Prostate gland (tissue), 2 donors: ENCODE measurements at regions of chr13 and their contacts with region 1.

Region 1: GRCh38 chr13:30114571-30115256 is 192.6 kb downstream of the KATNAL1 start:
- DNase-seq: peak; percentile 88
- H3K4me3 ChIP-seq: peak overlapping the region; percentile 52 to 82
- H3K27ac ChIP-seq: peak overlapping the region; percentile 39 to 63
- H3K4me1 ChIP-seq: peaks cover 2% of the 10 kb centered on the region
- H3K27me3 ChIP-seq: no peaks in the 10 kb centered on the region
- CTCF ChIP-seq: peak; percentile 90 to 97 (median 96)
- POLR2A ChIP-seq: peak; percentile 62

Region 2: GRCh38 chr13:29508130-29508875 is 606.4 kb before region 1 on chr13:
- intact Hi-C with region 1: loop called (anchors 2 kb)
- DNase-seq: peak; percentile 84
- H3K4me3 ChIP-seq: no peak overlapping the region
- H3K27ac ChIP-seq: no peak overlapping the region
- H3K4me1 ChIP-seq: no peaks in the 10 kb centered on the region
- H3K27me3 ChIP-seq: no peaks in the 10 kb centered on the region
- CTCF ChIP-seq: peak; percentile 87 to 99 (median 92)
- POLR2A ChIP-seq: no peak

Region 3: DNA sequence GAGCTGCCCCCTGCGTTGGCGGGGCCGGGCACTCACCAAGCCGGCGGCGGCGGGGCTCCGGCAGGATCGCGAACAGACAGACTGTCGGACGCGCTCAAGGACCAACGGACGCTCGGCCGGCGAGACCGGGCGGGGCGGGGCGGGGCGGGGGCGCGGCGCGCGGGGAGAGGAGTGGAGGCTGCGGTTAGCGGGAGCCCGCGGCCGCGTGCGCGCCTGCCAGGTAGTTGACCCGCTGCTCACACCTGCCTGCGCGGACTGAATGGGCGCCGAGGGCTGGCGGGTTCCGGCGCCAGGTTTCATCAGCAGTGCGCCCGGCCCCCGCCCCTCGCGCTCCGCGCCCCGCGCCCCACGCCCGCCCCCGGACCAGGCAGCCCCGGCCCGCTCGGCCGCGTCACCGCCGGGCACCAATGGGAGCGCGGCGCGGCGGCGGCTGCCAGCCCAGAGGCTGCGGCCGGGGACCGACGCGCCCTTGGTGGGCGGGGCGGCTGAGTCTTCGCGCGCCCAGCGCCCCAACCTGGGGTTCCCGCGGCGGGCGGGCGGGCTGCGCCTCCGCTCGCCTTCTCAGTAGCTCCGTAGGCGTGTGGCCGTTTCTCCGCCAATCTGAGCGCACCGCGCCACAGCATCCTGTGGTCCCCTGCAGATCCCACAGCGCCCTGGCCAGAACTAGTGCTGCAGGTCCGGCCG is 519.2 kb before region 1 on chr13 and contains the start of gene SLC7A1:
- intact Hi-C with region 1: loop called (anchors 10 kb)
- DNase-seq: peak; percentile 80
- H3K4me3 ChIP-seq: peak within 1 kb of the TSS; percentile 64 to 85
- H3K27ac ChIP-seq: peak within 1 kb of the TSS; percentile 65 to 82
- H3K4me1 ChIP-seq: no peaks in the 10 kb centered on the region
- H3K27me3 ChIP-seq: no peaks in the 10 kb centered on the region
- CTCF ChIP-seq: peak in 2 of 4 experiments; percentile 15 to 21
- POLR2A ChIP-seq: peak; percentile 66
- total RNA-seq, gene SLC7A1: 19.1 to 35.3 TPM

Region 4: DNA sequence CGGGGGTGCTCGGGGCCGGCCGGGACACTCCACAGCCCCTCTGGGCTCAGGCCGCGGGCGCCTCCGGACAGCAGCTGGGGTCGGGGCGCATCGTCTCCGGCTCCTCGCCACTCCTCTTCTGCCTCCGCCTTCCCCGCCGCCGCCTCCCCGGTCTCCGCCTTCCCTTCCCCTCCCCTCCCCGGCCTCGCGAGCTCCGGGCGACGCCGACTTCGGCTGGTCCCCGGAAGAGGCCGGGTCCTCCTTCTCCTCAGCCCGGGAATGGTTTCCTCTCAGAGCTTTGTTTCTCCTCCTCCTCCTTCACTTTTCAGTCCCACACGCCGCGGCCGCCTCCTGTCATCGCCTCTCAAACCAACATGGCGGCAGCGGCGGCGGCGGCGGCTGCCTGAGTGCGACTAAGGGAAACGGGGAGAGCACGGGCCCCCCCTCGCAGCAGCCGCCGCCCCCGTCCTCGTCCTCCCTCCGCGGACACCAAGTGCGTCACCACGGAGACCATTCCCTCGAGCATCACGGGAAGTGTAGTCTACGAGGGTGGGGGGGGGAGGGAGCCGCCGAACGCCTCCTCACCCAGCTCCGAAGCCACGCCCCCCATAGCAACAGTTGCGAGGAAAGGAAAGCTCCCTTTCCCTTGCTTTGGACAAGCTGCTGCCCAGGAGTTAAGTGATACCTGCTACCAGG is 264.4 kb before region 1 on chr13 and contains the start of gene UBL3:
- intact Hi-C with region 1: loop called (anchors 2 kb)
- DNase-seq: peak; percentile 98
- H3K4me3 ChIP-seq: peak within 1 kb of the TSS; percentile 67 to 68
- H3K27ac ChIP-seq: peak within 1 kb of the TSS; percentile 97 to 99
- H3K4me1 ChIP-seq: no peaks in the 10 kb centered on the region
- H3K27me3 ChIP-seq: no peaks in the 10 kb centered on the region
- CTCF ChIP-seq: no peak
- POLR2A ChIP-seq: peak; percentile 94
- total RNA-seq, gene UBL3: 36.3 to 38.2 TPM

Region 5: GRCh38 chr13:30364876-30365275 is 250.2 kb after region 1 on chr13:
- intact Hi-C with region 1: no loop called
- DNase-seq: no peak
- H3K4me3 ChIP-seq: no peak overlapping the region
- H3K27ac ChIP-seq: no peak overlapping the region
- H3K4me1 ChIP-seq: no peaks in the 10 kb centered on the region
- H3K27me3 ChIP-seq: no peaks in the 10 kb centered on the region
- CTCF ChIP-seq: no peak
- POLR2A ChIP-seq: no peak